Right ventricle myocardium superior (tissue), 1 donor: ENCODE measurements at regions of chr9 and their contacts with region 1.

Region 1: DNA sequence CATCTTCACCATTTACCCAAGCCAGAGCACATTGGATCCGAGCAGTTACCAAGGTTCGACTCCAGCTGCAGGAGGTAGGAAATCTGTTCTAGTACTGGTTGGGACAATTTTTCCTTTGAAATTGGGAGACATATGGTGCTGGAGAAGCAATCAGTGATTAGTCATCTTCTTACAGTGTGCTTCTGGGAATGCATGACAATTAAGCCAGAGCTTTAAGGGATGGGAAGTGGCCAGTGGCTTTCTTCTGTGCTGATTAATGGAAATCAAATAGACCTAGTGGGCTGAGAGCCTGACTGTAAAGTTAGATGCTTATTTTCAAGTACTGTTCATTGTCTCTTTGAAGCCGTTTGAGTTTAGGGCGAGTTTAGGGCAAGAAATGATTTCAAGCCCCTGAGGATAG is 152.1 kb downstream of the UNC13B start:
- DNase-seq: no peak
- ATAC-seq: no peak

Region 2: DNA sequence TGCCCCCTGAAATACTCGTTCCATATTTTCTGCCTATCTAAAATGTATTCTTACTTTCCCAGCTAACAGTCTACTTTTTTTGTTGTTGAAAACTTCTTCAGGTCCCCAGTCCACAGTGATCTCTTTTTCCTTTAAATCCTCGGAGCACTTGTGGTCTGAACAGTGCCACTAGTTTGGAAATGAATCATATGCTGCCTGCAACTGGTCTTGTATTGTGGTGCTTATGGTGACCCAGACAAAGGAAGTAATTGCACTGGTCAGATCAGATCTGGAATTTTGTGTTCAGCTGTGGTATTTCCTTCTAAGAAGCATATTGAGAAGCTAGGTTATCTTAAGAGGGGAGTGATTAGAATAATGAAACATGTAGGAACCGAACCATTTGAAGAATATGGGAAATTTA is 149.2 kb before region 1 on chr9:
- intact Hi-C with region 1: no loop called
- DNase-seq: no peak
- ATAC-seq: no peak

Region 3: GRCh38 chr9:35333551-35333950 is 19.6 kb after region 1 on chr9:
- intact Hi-C with region 1: no loop called
- DNase-seq: no peak
- ATAC-seq: no peak

Region 4: DNA sequence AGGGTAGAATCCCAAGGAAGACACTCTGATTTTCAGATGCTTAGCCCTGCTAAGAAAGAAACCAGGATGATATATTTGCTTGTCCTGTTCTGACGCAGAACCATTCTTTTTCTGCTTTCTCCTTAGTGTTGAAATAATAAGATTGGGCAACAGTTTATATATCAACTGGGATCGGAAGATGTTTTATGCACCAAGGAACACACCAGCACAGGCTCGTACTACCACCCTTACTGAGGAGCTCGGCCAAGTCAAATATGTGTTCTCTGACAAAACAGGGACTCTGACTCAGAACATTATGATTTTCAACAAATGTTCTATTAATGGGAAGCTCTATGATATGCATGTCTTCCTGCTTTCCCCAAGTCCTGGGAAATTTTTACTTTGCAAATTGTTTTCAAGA is 157.0 kb after region 1 on chr9:
- intact Hi-C with region 1: loop called (anchors 10 kb)
- DNase-seq: no peak
- ATAC-seq: no peak